Activated naive CD4-positive, alpha-beta T cell treated with anti-CD3 and anti-CD28 coated beads for 36 hours (primary cell): ENCODE measurements at regions of chr14 and their contacts with region 1.

Region 1: GRCh38 chr14:68271913-68272425 is 452.4 kb downstream of the RAD51B start:
- DNase-seq: no peak
- H3K4me3 Mint-ChIP-seq: no peak overlapping the region
- H3K27ac Mint-ChIP-seq: no peak overlapping the region
- H3K4me1 Mint-ChIP-seq: peaks cover 64% of the 10 kb centered on the region
- H3K27me3 Mint-ChIP-seq: no peaks in the 10 kb centered on the region

Region 2: GRCh38 chr14:68261092-68261842 is 10.7 kb before region 1 on chr14:
- CTCF ChIA-PET with region 1: no interaction called
- intact Hi-C with region 1: loop called (anchors 1 kb)
- DNase-seq: no peak
- H3K4me3 Mint-ChIP-seq: no peak overlapping the region
- H3K27ac Mint-ChIP-seq: no peak overlapping the region
- H3K4me1 Mint-ChIP-seq: peaks cover 60% of the 10 kb centered on the region
- H3K27me3 Mint-ChIP-seq: no peaks in the 10 kb centered on the region